CD4-positive, alpha-beta T cell (primary cell): ENCODE measurements at regions of chr13 and their contacts with region 1.

Region 1: DNA sequence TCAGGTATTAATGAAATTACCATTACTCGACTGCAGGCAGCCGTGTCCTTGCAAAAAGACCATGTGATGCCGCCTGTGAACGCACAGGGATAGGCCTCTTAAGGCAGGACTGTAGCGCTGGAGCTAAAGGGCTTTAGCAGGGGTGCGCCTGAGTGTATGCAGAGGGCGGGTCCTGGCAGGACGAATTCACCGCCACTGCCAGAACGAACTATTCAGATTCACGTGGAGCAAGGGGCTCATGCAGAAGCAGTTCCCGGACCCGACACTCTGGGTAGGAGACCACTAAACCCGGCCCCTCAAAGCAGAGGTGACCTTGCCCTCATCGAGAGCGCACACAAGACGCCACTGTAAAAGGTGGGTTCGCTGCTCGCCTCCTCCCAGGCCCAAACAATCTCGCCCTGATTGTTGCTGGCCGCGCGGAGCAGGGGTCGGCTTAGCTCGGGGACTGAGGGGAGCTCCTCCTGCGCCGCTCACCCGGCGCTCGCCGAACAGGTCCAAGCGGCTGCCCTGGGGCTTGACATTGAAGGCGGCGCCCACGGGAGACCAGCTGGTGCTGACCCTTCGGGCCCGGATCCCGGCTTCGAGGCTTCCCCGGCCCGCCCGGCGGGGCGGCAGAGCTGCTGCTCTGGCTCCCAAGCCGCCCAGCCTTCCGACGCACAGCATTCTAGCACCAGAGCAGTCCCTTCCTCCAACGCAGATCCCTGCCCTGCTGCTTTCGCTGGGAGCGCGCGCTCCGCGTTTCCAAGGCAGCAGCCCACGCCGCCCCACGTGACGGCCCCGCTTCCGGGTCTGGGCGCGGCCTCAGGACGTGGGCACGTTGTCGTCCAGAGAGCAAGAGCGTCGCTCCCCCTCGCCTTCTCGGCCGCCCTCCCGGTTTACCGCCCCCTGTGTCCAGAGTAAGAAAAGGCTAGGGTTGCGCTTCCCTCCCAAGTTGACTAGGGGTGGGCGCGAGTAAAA is at the start of gene MIPEP:
- DNase-seq: peak; percentile 68 to 94 (median 85)
- ATAC-seq: peak; percentile 91
- H3K4me3 ChIP-seq: peak within 1 kb of the TSS; percentile 81
- H3K4me3 Mint-ChIP-seq: peak within 1 kb of the TSS; percentile 94
- H3K27ac ChIP-seq: peak within 1 kb of the TSS; percentile 9 to 25
- H3K27ac Mint-ChIP-seq: peak within 1 kb of the TSS; percentile 76
- H3K4me1 ChIP-seq: peaks cover 18% of the 10 kb centered on the region
- H3K4me1 Mint-ChIP-seq: peaks cover 23% of the 10 kb centered on the region
- H3K27me3 ChIP-seq: no peaks in the 10 kb centered on the region
- H3K27me3 Mint-ChIP-seq: no peaks in the 10 kb centered on the region
- CTCF ChIP-seq: peak; percentile 86
- total RNA-seq, gene MIPEP: 3.9 to 4.8 TPM

Region 2: DNA sequence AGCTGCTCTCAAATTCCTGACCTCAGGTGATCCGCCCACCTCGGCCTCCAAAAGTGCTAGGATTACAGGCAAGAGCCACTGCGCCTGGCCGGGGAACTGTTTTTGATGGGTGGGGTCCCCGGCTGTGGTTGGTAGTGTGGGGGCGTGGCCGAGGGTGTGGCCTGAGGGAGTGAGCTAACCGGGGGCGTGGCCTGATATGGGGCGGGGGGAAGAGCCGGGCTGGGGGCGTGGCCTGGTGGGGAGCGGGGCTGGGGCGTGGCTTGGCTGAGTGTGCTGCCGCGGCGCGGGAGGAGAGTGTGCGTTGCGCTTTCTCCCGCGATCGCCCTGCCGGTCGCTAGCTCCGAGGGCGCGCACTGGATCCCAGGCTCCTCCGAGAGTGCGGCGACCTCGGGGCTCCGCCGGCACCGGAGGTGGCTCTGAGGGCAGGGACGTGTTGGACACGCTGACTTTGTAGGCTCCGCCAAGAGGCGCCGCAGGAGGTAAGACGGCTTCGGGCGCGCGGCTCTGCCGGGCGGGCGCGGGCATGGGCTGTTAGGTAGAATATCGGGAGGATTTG is 271.6 kb after region 1 on chr13 and contains the start of gene SPATA13:
- CTCF ChIA-PET with region 1: no interaction called
- POLR2A ChIA-PET with region 1: no interaction called
- intact Hi-C with region 1: loop called in 1 of 2 experiments (anchors 2 kb)
- DNase-seq: peak; percentile 89 to 99 (median 94)
- ATAC-seq: peak; percentile 92
- H3K4me3 ChIP-seq: peak within 1 kb of the TSS; percentile 81
- H3K4me3 Mint-ChIP-seq: peak within 1 kb of the TSS; percentile 90
- H3K27ac ChIP-seq: no peak within 1 kb of the TSS
- H3K27ac Mint-ChIP-seq: peak within 1 kb of the TSS; percentile 74
- H3K4me1 ChIP-seq: peaks cover 18% of the 10 kb centered on the region
- H3K4me1 Mint-ChIP-seq: peaks cover 14% of the 10 kb centered on the region
- H3K27me3 ChIP-seq: no peaks in the 10 kb centered on the region
- H3K27me3 Mint-ChIP-seq: no peaks in the 10 kb centered on the region
- CTCF ChIP-seq: no peak
- total RNA-seq, gene SPATA13: 87.7 to 94.6 TPM